CD4-positive, alpha-beta memory T cell (primary cell): ENCODE measurements at regions of chr11 and their contacts with region 1.

Region 1: GRCh38 chr11:18526521-18527296 is at the start of gene TSG101:
- DNase-seq: peak; percentile 91 to 94 (median 92)
- H3K4me3 ChIP-seq: peak within 1 kb of the TSS; percentile 70 to 72
- H3K4me3 Mint-ChIP-seq: peak within 1 kb of the TSS; percentile 99 to 100 (median 100)
- H3K27ac ChIP-seq: peak within 1 kb of the TSS; percentile 99
- H3K27ac Mint-ChIP-seq: peak within 1 kb of the TSS; percentile 100
- H3K4me1 ChIP-seq: peaks cover 38% of the 10 kb centered on the region
- H3K4me1 Mint-ChIP-seq: peaks cover 32 to 57% (median 42%) of the 10 kb centered on the region in 4 donors
- H3K27me3 ChIP-seq: no peaks in the 10 kb centered on the region
- H3K27me3 Mint-ChIP-seq: no peaks in the 10 kb centered on the region
- total RNA-seq, gene TSG101: 40.0 to 41.2 TPM

Region 2: GRCh38 chr11:17827006-17827405 is 699.7 kb before region 1 on chr11:
- CTCF ChIA-PET with region 1: no interaction called
- POLR2A ChIA-PET with region 1: no interaction called
- intact Hi-C with region 1: no loop called
- DNase-seq: no peak
- H3K4me3 ChIP-seq: no peak overlapping the region
- H3K4me3 Mint-ChIP-seq: no peak overlapping the region
- H3K27ac ChIP-seq: no peak overlapping the region
- H3K27ac Mint-ChIP-seq: no peak overlapping the region
- H3K4me1 ChIP-seq: no peaks in the 10 kb centered on the region
- H3K4me1 Mint-ChIP-seq: peaks cover 0 to 5% (median 0%) of the 10 kb centered on the region in 4 donors
- H3K27me3 ChIP-seq: no peaks in the 10 kb centered on the region
- H3K27me3 Mint-ChIP-seq: no peaks in the 10 kb centered on the region

Region 3: GRCh38 chr11:18012863-18013781 is 513.6 kb before region 1 on chr11 and contains the start of gene SERGEF:
- CTCF ChIA-PET with region 1: no interaction called
- POLR2A ChIA-PET with region 1: interaction called, 9 read pairs
- intact Hi-C with region 1: loop called (anchors 2 kb)
- DNase-seq: peak; percentile 91 to 92 (median 91)
- H3K4me3 ChIP-seq: peak within 1 kb of the TSS; percentile 72 to 94
- H3K4me3 Mint-ChIP-seq: peak within 1 kb of the TSS; percentile 93 to 99 (median 96)
- H3K27ac ChIP-seq: peak within 1 kb of the TSS; percentile 73
- H3K27ac Mint-ChIP-seq: peak within 1 kb of the TSS; percentile 94 to 100 (median 98)
- H3K4me1 ChIP-seq: peaks cover 19% of the 10 kb centered on the region
- H3K4me1 Mint-ChIP-seq: peaks cover 18 to 41% (median 26%) of the 10 kb centered on the region in 4 donors
- H3K27me3 ChIP-seq: no peaks in the 10 kb centered on the region
- H3K27me3 Mint-ChIP-seq: no peaks in the 10 kb centered on the region
- total RNA-seq, gene SERGEF: 46.2 to 54.1 TPM

Region 4: GRCh38 chr11:18221274-18221876 is 305.3 kb before region 1 on chr11:
- CTCF ChIA-PET with region 1: no interaction called
- POLR2A ChIA-PET with region 1: no interaction called
- intact Hi-C with region 1: no loop called
- DNase-seq: no peak
- H3K4me3 ChIP-seq: no peak overlapping the region
- H3K4me3 Mint-ChIP-seq: no peak overlapping the region
- H3K27ac ChIP-seq: no peak overlapping the region
- H3K27ac Mint-ChIP-seq: no peak overlapping the region
- H3K4me1 ChIP-seq: no peaks in the 10 kb centered on the region
- H3K4me1 Mint-ChIP-seq: no peaks in the 10 kb centered on the region
- H3K27me3 ChIP-seq: no peaks in the 10 kb centered on the region
- H3K27me3 Mint-ChIP-seq: peaks cover 6 to 9% of the 10 kb centered on the region in 2 donors

Region 5: DNA sequence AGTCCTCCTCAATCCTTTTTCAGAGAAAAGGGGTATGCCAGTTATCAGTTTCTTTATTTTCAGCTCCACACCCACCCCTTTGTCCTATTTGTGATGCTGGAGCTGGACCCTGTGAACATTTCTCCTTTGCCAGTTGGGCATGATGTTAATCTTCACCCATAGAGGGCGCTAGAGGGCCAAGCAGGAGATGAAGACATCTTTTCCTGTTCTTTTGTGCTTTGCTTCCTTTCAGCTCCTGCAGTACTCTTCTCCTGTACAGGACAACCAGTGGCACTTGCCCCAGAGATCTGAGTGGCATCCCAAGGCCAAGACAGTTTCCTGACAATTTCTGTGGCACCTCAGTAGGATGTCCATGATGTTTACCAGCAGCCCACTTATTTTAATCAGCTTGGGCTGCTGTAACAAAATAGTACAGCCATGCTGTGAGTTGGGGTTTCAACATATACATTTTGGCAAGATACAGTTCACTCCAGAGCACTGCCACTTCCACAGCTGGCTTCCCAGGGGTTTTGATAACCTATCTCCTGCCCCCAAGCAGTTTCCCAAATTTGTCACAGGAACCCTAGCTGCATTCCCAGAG is 282.8 kb before region 1 on chr11:
- CTCF ChIA-PET with region 1: interaction called, 7 read pairs
- POLR2A ChIA-PET with region 1: interaction called, 6 read pairs
- intact Hi-C with region 1: loop called (anchors 5 kb)
- DNase-seq: peak; percentile 71 to 79 (median 73)
- H3K4me3 ChIP-seq: no peak overlapping the region
- H3K4me3 Mint-ChIP-seq: peak overlapping the region in 1 of 8 donors; percentile 46
- H3K27ac ChIP-seq: no peak overlapping the region
- H3K27ac Mint-ChIP-seq: peak overlapping the region in 6 of 7 donors; percentile 2 to 48 (median 24)
- H3K4me1 ChIP-seq: peaks cover 8% of the 10 kb centered on the region
- H3K4me1 Mint-ChIP-seq: peaks cover 10 to 27% (median 18%) of the 10 kb centered on the region in 4 donors
- H3K27me3 ChIP-seq: peaks cover 3% of the 10 kb centered on the region
- H3K27me3 Mint-ChIP-seq: peaks cover 8 to 9% of the 10 kb centered on the region in 2 donors

Region 6: DNA sequence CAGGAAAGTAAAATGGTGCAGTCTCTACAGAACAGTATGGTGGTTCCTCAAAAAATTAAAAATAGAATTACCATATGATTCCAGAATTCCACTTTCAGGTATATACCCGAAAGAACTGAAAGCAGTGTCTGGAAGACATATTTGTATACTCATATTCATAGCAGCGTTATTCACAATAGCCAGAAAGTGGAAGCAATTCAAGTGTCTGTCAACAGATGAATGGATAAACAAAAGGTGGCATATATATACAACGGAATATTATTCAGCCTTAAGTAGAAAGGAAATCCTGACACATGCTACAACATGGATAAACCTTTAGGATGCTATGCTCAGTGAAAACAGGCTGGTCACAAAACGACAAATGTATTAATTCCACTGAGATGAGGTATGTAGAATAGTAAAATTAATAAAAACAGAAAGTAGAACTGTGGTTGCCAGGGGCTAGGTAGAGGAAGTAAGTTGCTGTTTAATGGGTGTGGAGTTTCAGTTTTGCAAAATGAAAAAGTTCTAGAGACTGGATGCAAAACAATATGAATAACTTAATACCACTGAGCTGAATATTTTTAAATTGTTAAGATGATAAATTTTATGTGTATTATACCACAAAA is 246.2 kb before region 1 on chr11:
- CTCF ChIA-PET with region 1: no interaction called
- POLR2A ChIA-PET with region 1: no interaction called
- intact Hi-C with region 1: no loop called
- DNase-seq: no peak
- H3K4me3 ChIP-seq: no peak overlapping the region
- H3K4me3 Mint-ChIP-seq: peak overlapping the region in 6 of 8 donors; percentile 26 to 85 (median 68)
- H3K27ac ChIP-seq: no peak overlapping the region
- H3K27ac Mint-ChIP-seq: peak overlapping the region; percentile 4 to 88 (median 62)
- H3K4me1 ChIP-seq: peaks cover 6% of the 10 kb centered on the region
- H3K4me1 Mint-ChIP-seq: peaks cover 6 to 17% (median 12%) of the 10 kb centered on the region in 4 donors
- H3K27me3 ChIP-seq: no peaks in the 10 kb centered on the region
- H3K27me3 Mint-ChIP-seq: no peaks in the 10 kb centered on the region

Region 7: DNA sequence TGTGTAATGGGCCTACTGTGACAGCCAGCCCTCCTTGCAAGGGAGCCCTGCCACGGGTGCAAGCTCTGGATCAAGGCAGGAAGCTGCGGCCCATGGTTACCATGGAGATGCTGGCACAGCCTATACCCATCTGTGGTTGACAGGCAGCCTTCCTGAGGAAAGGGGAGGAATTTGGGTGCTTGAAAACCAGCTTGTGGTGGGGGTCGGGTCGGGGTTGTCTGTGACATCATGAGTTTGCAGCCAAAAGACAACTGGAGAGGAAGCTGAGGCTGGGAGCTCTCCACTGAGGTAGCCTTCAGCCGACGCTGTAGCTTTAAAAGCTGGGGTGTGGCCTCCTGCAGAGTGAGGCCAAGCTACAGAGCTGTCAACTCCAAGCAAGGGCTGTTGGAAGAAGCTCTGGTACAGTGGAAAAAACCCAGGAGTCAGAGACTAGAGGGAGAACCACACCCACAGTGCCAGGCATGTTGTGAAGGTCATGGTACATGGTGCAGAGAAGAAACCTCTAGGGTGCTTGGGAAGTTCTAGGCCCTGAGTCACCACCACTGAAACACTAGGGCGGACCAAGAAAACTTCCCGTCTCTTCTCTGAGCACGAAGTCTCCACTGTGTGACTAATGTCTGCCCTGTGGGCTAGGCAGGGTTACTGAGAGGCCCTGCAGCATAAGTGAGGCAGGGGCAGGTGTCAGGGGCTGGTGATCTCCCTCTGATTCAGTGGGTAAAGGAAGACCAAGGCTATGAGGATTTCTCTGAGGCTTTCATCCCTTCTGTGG is 143.1 kb before region 1 on chr11:
- CTCF ChIA-PET with region 1: no interaction called
- POLR2A ChIA-PET with region 1: interaction called, 20 read pairs
- intact Hi-C with region 1: no loop called
- DNase-seq: peak; percentile 76 to 89 (median 81)
- H3K4me3 ChIP-seq: peak overlapping the region; percentile 29 to 32
- H3K4me3 Mint-ChIP-seq: peak overlapping the region; percentile 67 to 87 (median 82)
- H3K27ac ChIP-seq: peak overlapping the region; percentile 71
- H3K27ac Mint-ChIP-seq: peak overlapping the region; percentile 96 to 99 (median 98)
- H3K4me1 ChIP-seq: peaks cover 51% of the 10 kb centered on the region
- H3K4me1 Mint-ChIP-seq: peaks cover 30 to 51% (median 40%) of the 10 kb centered on the region in 4 donors
- H3K27me3 ChIP-seq: no peaks in the 10 kb centered on the region
- H3K27me3 Mint-ChIP-seq: no peaks in the 10 kb centered on the region

Region 8: GRCh38 chr11:18540207-18541009 is 13.7 kb after region 1 on chr11:
- CTCF ChIA-PET with region 1: interaction called, 13 read pairs
- POLR2A ChIA-PET with region 1: interaction called, 11 read pairs
- intact Hi-C with region 1: no loop called
- DNase-seq: peak in 4 of 5 donors; percentile 46 to 58 (median 54)
- H3K4me3 ChIP-seq: no peak overlapping the region
- H3K4me3 Mint-ChIP-seq: no peak overlapping the region
- H3K27ac ChIP-seq: no peak overlapping the region
- H3K27ac Mint-ChIP-seq: peak overlapping the region in 5 of 7 donors; percentile 25 to 81 (median 33)
- H3K4me1 ChIP-seq: no peaks in the 10 kb centered on the region
- H3K4me1 Mint-ChIP-seq: peaks cover 0 to 7% (median 0%) of the 10 kb centered on the region in 4 donors
- H3K27me3 ChIP-seq: no peaks in the 10 kb centered on the region
- H3K27me3 Mint-ChIP-seq: no peaks in the 10 kb centered on the region

Region 9: DNA sequence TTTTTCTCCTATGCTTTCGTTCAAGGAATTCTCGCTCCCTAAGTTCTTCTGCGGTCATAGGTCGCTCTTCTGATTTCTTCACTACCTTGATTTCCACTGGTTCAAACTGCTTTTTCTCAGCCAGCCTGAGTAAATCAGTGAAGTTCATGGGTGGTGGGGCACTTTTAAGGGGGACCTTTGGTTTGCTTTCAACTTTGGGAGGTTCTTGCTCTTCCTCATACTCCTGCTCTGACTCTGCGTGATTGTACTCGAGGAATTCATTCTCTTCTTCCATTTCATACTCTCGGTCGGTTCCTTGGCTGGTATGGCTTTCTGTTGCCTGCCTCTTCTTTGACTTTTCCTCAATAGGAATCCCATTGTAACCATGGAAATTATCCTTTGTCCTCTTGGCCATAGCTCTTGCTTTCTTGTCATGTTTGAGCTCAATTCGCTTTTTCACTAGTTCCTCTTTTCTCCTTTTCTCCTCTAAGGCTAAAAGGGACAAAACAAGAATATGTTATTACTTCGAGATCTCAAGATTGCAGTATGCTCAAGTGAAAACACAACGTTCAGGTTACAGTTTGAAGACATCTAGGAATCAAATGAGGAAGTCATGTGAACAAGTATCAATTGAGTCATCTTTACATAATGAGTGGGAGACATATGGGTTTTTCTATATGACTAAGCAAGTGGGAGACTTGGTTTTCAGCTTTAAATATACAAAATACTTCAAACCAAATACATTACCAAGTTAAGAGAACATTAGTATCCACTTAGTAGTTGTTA is 89.1 kb after region 1 on chr11:
- CTCF ChIA-PET with region 1: no interaction called
- POLR2A ChIA-PET with region 1: interaction called, 13 read pairs
- intact Hi-C with region 1: no loop called
- DNase-seq: no peak
- H3K4me3 ChIP-seq: no peak overlapping the region
- H3K4me3 Mint-ChIP-seq: peak overlapping the region in 5 of 8 donors; percentile 1 to 43 (median 15)
- H3K27ac ChIP-seq: no peak overlapping the region
- H3K27ac Mint-ChIP-seq: peak overlapping the region in 4 of 7 donors; percentile 63 to 90 (median 70)
- H3K4me1 ChIP-seq: peaks cover 48% of the 10 kb centered on the region
- H3K4me1 Mint-ChIP-seq: peaks cover 31 to 61% (median 42%) of the 10 kb centered on the region in 4 donors
- H3K27me3 ChIP-seq: no peaks in the 10 kb centered on the region
- H3K27me3 Mint-ChIP-seq: no peaks in the 10 kb centered on the region

Region 10: GRCh38 chr11:18706330-18707243 is 179.9 kb after region 1 on chr11:
- CTCF ChIA-PET with region 1: interaction called, 4 read pairs
- POLR2A ChIA-PET with region 1: interaction called, 18 read pairs
- intact Hi-C with region 1: no loop called
- DNase-seq: peak; percentile 50 to 77 (median 61)
- H3K4me3 ChIP-seq: peak overlapping the region; percentile 53 to 60
- H3K4me3 Mint-ChIP-seq: peak overlapping the region; percentile 91 to 97 (median 95)
- H3K27ac ChIP-seq: peak overlapping the region; percentile 52
- H3K27ac Mint-ChIP-seq: peak overlapping the region; percentile 78 to 98 (median 96)
- H3K4me1 ChIP-seq: peaks cover 13% of the 10 kb centered on the region
- H3K4me1 Mint-ChIP-seq: peaks cover 13 to 30% (median 21%) of the 10 kb centered on the region in 4 donors
- H3K27me3 ChIP-seq: no peaks in the 10 kb centered on the region
- H3K27me3 Mint-ChIP-seq: no peaks in the 10 kb centered on the region